HEK293 (cell line): ENCODE measurements at regions of chr1 and their contacts with region 1.

Region 1: GRCh38 chr1:44985747-44986359 is 542 bp downstream of the EIF2B3 start:
- H3K4me3 ChIP-seq: peak overlapping the region; percentile 86
- H3K27ac ChIP-seq: no peak overlapping the region; the same call in 1 of the 2 replicates
- H3K4me1 ChIP-seq: no peaks in the 10 kb centered on the region
- CTCF ChIP-seq: no peak

Region 2: DNA sequence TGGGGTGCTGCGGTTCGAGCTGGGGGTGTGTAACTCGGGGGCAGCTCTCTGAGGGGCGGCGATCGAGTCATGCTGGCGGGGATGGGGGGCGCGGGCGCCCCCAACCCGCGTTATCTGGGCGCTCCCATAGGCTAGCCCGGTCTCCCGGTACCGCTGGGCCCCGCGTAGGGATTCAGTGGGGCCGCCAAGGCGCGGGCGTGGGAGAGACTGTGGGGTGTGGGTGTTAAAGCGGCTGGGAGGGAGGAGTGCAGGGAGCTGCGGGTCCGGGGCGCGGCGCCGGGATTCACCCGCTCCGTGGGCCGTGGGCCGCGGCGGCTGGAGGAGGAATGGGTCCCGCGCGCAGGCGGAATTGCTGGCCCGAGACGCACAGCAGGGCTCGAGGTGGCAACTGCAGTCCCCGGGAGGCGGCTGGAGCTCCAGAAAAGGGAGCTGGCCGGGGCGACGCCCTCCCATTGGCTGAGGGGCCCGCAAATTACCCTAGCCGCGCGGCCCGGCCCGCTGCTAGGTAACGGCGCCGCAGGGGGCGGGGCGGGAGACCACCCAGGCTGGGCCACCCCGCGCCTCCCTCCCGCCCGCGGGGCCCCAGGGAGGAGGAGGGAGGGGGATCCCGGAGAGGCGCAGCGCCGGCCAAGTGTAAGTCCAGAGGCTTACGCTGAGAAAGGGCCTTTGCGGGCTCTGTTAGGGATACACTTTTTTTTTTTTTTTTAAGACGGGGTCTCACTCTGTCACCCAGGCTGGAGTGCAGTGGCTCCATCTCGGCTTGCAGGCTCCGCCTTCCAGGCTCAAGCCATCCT is 142.8 kb before region 1 on chr1 and contains the start of gene PTCH2:
- CTCF ChIA-PET with region 1: interaction called, 4 read pairs
- POLR2A ChIA-PET with region 1: interaction called, 10 read pairs
- H3K4me3 ChIP-seq: peak within 1 kb of the TSS; percentile 59
- H3K27ac ChIP-seq: peak within 1 kb of the TSS; percentile 45; the same call in 1 of the 2 replicates
- H3K4me1 ChIP-seq: no peaks in the 10 kb centered on the region
- CTCF ChIP-seq: no peak

Region 3: DNA sequence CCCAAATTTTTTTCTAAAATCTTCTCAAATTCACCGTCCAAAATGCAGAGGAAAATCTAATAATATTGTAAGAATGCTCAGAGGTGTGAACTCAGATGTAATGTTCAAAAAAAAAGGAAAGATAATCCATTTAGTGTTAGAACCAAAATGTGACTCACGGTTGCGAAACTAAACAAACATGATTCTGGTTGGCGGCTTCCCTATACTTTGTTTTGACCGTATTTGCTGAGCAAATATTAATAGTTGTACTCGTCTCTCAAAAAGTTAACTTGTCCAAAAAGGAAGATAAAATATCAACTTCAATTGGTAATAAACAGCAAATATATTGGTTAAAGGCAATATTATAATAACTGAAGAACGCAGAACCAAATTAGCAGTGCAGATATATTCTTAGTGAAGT is 186.2 kb after region 1 on chr1:
- CTCF ChIA-PET with region 1: no interaction called
- POLR2A ChIA-PET with region 1: no interaction called
- H3K4me3 ChIP-seq: no peak overlapping the region
- H3K27ac ChIP-seq: no peak overlapping the region
- H3K4me1 ChIP-seq: peaks cover 18% of the 10 kb centered on the region; the same call in 1 of the 2 replicates
- CTCF ChIP-seq: no peak